Activated T-helper 1 cell treated with anti-CD3 and anti-CD28 coated beads, Interleukin-12 subunit alpha, Interleukin-12 subunit beta, Interleukin-2, Interleukin-4 antibody, amounts not matched to agents 30 ng/mL and 10 ng/mL and 1 ng/mL, durations not matched to agents 14 hours and 24 hours and 36 hours (primary cell): ENCODE measurements at regions of chr5 and their contacts with region 1.

Region 1: DNA sequence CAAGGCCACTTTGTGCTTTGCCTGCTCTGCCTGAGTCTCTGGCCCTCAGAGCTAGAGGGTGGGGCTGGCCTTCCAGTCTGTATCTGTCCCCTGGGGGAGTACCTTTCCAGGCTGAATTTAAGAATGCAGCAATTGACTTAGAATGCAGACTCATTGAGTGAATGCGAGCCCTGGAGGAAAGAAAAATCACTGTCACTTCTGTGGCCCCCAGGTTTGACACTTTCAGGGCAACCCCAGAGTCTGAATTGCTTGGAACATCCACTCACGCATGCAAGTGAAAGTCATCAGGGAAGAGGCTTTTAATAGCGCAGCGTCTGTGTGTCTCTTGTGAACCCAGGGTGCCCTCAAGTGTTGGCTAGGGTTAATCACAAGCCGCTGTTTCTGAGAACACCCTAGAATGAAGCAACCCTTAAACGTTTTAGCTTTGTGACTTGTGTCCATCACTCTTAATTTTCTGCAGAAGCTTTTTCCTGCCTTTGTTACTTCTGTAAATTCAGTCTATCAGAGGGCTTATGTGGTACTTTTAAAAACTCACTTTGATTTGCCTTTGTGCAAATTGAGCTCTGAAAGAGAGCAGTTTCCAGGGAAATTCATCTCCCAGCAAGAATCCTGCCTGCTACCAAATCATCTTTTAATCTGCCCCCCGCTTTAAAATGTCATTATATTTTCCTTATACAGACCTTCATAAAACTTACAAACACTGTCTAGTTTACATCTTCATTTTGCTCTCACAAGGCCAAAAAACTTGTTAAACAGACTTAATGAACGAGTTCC is 146.8 kb upstream of the IQGAP2 start:
- DNase-seq: peak; percentile 55
- H3K4me3 Mint-ChIP-seq: no peak overlapping the region
- H3K27ac Mint-ChIP-seq: no peak overlapping the region
- H3K4me1 Mint-ChIP-seq: no peaks in the 10 kb centered on the region
- H3K27me3 Mint-ChIP-seq: peaks cover 22% of the 10 kb centered on the region

Region 2: DNA sequence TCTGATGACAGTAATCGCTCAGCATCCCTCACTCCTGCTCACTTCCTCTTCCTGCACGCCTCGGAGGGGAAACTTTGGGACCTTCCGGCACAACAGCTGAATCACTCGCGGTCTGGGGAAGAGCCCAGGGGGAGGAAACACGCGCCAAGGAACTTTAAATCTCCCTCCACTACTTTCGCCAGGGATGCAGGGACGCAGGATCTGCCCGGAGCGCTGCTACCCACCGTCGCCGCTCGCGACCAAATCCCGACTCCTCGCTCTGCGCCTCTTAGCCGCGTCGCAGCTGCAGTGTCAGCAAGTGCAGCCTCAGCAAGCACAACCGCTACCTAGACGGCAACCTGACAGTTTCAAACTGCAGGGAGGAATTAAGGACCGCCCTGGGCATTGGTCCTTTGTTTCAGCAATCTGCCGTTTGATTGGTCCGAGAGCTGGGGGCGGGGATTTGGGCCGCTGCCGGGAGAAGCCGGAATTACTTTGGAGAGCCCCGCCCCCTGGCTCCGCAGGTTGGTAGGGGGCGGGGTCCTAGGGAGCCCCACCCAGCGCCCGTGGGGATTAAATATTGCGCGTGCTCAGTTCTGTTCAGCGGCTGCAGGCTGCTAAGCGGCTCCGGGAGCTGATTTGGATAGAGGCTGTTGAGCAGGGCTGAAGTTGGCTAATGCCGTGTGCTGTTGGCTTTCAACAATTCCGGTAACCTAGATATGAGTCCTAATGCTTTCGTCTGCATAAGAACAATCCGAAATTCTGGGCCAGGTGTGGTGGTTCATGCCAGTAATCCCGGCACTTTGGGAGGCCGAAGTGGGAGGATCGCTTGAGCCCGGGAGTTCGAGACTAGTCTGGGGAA is 539.0 kb before region 1 on chr5 and contains the start of gene POC5:
- intact Hi-C with region 1: loop called (anchors 5 kb)
- DNase-seq: peak; percentile 98
- H3K4me3 Mint-ChIP-seq: peak within 1 kb of the TSS; percentile 98
- H3K27ac Mint-ChIP-seq: peak within 1 kb of the TSS; percentile 100
- H3K4me1 Mint-ChIP-seq: peaks cover 34% of the 10 kb centered on the region
- H3K27me3 Mint-ChIP-seq: peaks cover 3% of the 10 kb centered on the region
- total RNA-seq, gene POC5: 20.7 and 24.2 TPM in 2 replicates

Region 3: GRCh38 chr5:76014005-76014404 is 242.3 kb before region 1 on chr5:
- intact Hi-C with region 1: loop called (anchors 1 kb)
- DNase-seq: no peak
- H3K4me3 Mint-ChIP-seq: no peak overlapping the region
- H3K27ac Mint-ChIP-seq: no peak overlapping the region
- H3K4me1 Mint-ChIP-seq: no peaks in the 10 kb centered on the region
- H3K27me3 Mint-ChIP-seq: peaks cover 12% of the 10 kb centered on the region

Region 4: GRCh38 chr5:76145945-76146344 is 110.4 kb before region 1 on chr5:
- intact Hi-C with region 1: loop called (anchors 10 kb)
- DNase-seq: no peak
- H3K4me3 Mint-ChIP-seq: no peak overlapping the region
- H3K27ac Mint-ChIP-seq: no peak overlapping the region
- H3K4me1 Mint-ChIP-seq: no peaks in the 10 kb centered on the region
- H3K27me3 Mint-ChIP-seq: peaks cover 10% of the 10 kb centered on the region

Region 5: GRCh38 chr5:76303921-76304320 is 47.6 kb after region 1 on chr5:
- intact Hi-C with region 1: loop called (anchors 5 kb)
- DNase-seq: peak; percentile 33
- H3K4me3 Mint-ChIP-seq: no peak overlapping the region
- H3K27ac Mint-ChIP-seq: no peak overlapping the region
- H3K4me1 Mint-ChIP-seq: peaks cover 41% of the 10 kb centered on the region
- H3K27me3 Mint-ChIP-seq: peaks cover 5% of the 10 kb centered on the region